Thyroid gland (tissue), 4 donors: ENCODE measurements at regions of chr17 and their contacts with region 1.

Region 1: GRCh38 chr17:40551879-40552768 is 13.1 kb downstream of the CCR7 start:
- DNase-seq: peak in 1 of 2 donors; percentile 45
- H3K4me3 ChIP-seq: no peak overlapping the region
- H3K27ac ChIP-seq: peak overlapping the region; percentile 95 to 97 (median 97)
- H3K4me1 ChIP-seq: peaks cover 76 to 98% of the 10 kb centered on the region in 2 donors
- H3K27me3 ChIP-seq: no peaks in the 10 kb centered on the region
- CTCF ChIP-seq: no peak
- POLR2A ChIP-seq: no peak

Region 2: DNA sequence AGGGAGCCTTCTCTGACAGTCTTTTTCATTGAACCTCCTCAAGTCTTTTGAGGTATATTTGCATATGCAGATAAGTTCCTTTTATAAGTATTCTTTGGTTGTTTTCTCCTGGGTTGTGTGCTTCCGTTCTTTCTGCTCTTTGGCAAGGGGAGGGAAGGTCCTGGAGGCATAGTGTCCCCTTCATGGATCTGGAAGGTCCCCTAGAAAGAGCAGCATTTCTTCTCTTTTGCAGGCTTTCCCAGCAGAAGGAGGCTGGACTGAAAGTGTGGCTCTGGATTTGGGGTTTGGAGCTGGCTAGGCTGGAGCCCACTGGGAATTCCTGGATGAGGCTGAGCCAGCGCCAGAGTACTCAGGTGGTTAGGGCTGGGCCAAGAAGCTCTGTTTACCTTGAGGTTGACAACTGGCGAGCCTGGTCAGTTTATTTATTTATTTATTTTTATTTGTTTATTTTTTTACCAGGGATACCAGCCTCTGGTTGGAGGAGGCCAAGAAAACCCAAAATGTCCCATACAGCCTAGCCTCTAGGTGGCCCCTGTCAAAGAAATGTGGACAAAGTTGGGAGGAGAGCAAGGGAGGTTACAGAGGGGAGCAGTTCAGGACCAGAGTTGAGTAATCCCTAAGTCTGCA is 129.0 kb before region 1 on chr17:
- intact Hi-C with region 1: no loop called
- DNase-seq: no peak
- H3K4me3 ChIP-seq: no peak overlapping the region
- H3K27ac ChIP-seq: no peak overlapping the region
- H3K4me1 ChIP-seq: peaks cover 5 to 9% of the 10 kb centered on the region in 2 donors
- H3K27me3 ChIP-seq: no peaks in the 10 kb centered on the region
- CTCF ChIP-seq: peak in 1 of 6 experiments; percentile 6
- POLR2A ChIP-seq: no peak

Region 3: GRCh38 chr17:40490289-40490853 is 61.8 kb before region 1 on chr17:
- intact Hi-C with region 1: loop called (anchors 5 kb)
- DNase-seq: peak; percentile 89 to 90
- H3K4me3 ChIP-seq: no peak overlapping the region
- H3K27ac ChIP-seq: peak overlapping the region; percentile 83 to 94 (median 90)
- H3K4me1 ChIP-seq: peaks cover 23 to 47% of the 10 kb centered on the region in 2 donors
- H3K27me3 ChIP-seq: no peaks in the 10 kb centered on the region
- CTCF ChIP-seq: no peak
- POLR2A ChIP-seq: no peak

Region 4: GRCh38 chr17:40602775-40603551 is 50.8 kb after region 1 on chr17:
- intact Hi-C with region 1: no loop called
- DNase-seq: no peak
- H3K4me3 ChIP-seq: no peak overlapping the region
- H3K27ac ChIP-seq: no peak overlapping the region
- H3K4me1 ChIP-seq: peaks cover 17 to 32% of the 10 kb centered on the region in 2 donors
- H3K27me3 ChIP-seq: no peaks in the 10 kb centered on the region
- CTCF ChIP-seq: no peak
- POLR2A ChIP-seq: no peak

Region 5: GRCh38 chr17:40647624-40648383 is 95.7 kb after region 1 on chr17 and contains the start of gene SMARCE1:
- intact Hi-C with region 1: no loop called
- DNase-seq: peak; percentile 80
- H3K4me3 ChIP-seq: peak within 1 kb of the TSS; percentile 37 to 98 (median 81)
- H3K27ac ChIP-seq: peak within 1 kb of the TSS; percentile 97 to 100 (median 99)
- H3K4me1 ChIP-seq: peaks cover 19 to 20% of the 10 kb centered on the region in 2 donors
- H3K27me3 ChIP-seq: no peaks in the 10 kb centered on the region
- CTCF ChIP-seq: peak in 1 of 6 experiments; percentile 3
- POLR2A ChIP-seq: peak in 1 of 2 donors; percentile 47
- total RNA-seq, gene SMARCE1: 82.1 to 125 (median 108) TPM

Region 6: DNA sequence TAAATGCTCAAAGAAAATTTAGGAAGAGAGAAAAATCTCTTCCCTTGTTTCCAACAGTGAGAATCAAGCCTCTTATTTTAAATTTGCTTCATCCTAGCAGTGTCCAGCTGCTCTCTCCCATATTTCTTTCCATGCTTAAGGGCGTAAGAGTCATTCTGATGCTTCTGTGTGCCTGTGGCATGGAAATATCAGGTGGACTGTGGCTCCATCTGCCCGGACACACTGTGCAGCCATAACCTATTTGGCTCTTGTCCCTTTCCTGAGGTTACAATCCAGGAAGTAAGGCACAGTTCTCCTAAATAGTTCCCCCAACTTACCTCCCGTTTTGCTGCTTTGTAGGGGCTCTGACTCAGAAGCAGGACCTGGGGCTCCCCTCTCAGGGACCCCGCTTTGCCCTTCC is 119.2 kb after region 1 on chr17:
- intact Hi-C with region 1: no loop called
- DNase-seq: no peak
- H3K4me3 ChIP-seq: no peak overlapping the region
- H3K27ac ChIP-seq: no peak overlapping the region
- H3K4me1 ChIP-seq: no peaks in the 10 kb centered on the region
- H3K27me3 ChIP-seq: no peaks in the 10 kb centered on the region
- CTCF ChIP-seq: no peak
- POLR2A ChIP-seq: no peak